Activated CD8-positive, alpha-beta T cell treated with anti-CD3 and anti-CD28 coated beads for 36 hours (primary cell): ENCODE measurements at regions of chr11 and their contacts with region 1.

Region 1: GRCh38 chr11:65329944-65330403 is 3.7 kb upstream of the DPF2 start:
- DNase-seq: peak; percentile 97
- ATAC-seq: peak; percentile 24
- H3K4me3 Mint-ChIP-seq: peak overlapping the region; percentile 3
- H3K27ac Mint-ChIP-seq: no peak overlapping the region
- H3K4me1 Mint-ChIP-seq: peaks cover 12% of the 10 kb centered on the region
- H3K27me3 Mint-ChIP-seq: no peaks in the 10 kb centered on the region
- CTCF ChIP-seq: peak; percentile 92

Region 2: GRCh38 chr11:65134386-65135253 is 195.4 kb before region 1 on chr11 and contains the start of gene SYVN1:
- CTCF ChIA-PET with region 1: interaction called, 10 read pairs
- POLR2A ChIA-PET with region 1: interaction called, 3 read pairs
- intact Hi-C with region 1: no loop called
- DNase-seq: peak; percentile 93
- ATAC-seq: peak; percentile 89
- H3K4me3 Mint-ChIP-seq: peak within 1 kb of the TSS; percentile 100
- H3K27ac Mint-ChIP-seq: peak within 1 kb of the TSS; percentile 100
- H3K4me1 Mint-ChIP-seq: peaks cover 33% of the 10 kb centered on the region
- H3K27me3 Mint-ChIP-seq: no peaks in the 10 kb centered on the region
- CTCF ChIP-seq: no peak
- total RNA-seq, gene SYVN1: 20.6 to 26.8 TPM

Region 3: GRCh38 chr11:65204646-65205601 is 125.0 kb before region 1 on chr11:
- CTCF ChIA-PET with region 1: interaction called, 18 read pairs
- POLR2A ChIA-PET with region 1: no interaction called
- intact Hi-C with region 1: no loop called
- DNase-seq: peak; percentile 55
- ATAC-seq: peak; percentile 90
- H3K4me3 Mint-ChIP-seq: no peak overlapping the region
- H3K27ac Mint-ChIP-seq: no peak overlapping the region
- H3K4me1 Mint-ChIP-seq: peaks cover 3% of the 10 kb centered on the region
- H3K27me3 Mint-ChIP-seq: no peaks in the 10 kb centered on the region
- CTCF ChIP-seq: peak; percentile 98

Region 4: DNA sequence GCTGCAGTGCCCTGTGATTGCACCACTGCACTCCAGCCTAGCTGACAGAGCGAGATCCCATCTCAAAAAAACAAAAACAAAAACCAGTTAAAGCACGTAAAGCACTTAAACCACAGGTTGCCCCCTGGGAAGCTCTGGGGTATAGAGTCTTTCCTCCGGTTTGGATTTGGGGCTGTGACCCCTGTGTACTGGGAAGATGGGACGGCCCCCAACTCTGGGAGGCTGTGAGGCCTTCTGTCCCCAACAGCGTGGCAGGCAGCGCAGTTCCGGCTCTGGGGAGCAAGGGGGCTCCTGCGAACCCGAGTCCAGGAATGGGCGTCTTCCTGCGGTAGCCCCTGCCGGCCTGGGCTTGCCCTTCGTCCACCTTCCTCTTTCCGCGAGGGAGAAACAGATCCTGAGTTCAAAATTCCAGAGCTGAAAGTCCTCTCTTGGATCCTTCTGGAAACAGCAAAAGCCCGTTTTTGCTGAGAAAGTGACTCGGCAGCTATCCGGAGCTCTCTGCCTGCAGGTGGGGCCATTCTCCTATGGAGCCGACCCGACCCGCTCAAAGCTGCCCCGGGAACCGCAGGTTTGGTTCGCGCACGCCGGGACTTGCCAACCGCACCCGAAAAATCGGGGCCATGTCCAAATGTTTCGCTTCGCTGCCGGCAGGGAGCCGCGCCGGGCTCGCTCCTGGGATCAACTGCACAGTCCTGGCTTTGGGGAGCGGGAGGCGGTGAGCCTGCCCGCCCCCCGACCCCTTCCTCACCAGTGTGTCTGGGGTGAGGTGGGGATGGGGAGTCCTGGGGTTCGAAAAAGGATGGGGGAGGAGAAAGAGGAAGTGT is 104.5 kb before region 1 on chr11:
- CTCF ChIA-PET with region 1: interaction called, 34 read pairs
- POLR2A ChIA-PET with region 1: interaction called, 4 read pairs
- intact Hi-C with region 1: no loop called
- DNase-seq: peak; percentile 76
- ATAC-seq: peak; percentile 85
- H3K4me3 Mint-ChIP-seq: peak overlapping the region; percentile 72
- H3K27ac Mint-ChIP-seq: no peak overlapping the region
- H3K4me1 Mint-ChIP-seq: peaks cover 7% of the 10 kb centered on the region
- H3K27me3 Mint-ChIP-seq: peaks cover 19% of the 10 kb centered on the region
- CTCF ChIP-seq: peak; percentile 58

Region 5: GRCh38 chr11:65261591-65262380 is 68.2 kb before region 1 on chr11 and contains the start of gene POLA2:
- CTCF ChIA-PET with region 1: interaction called, 19 read pairs
- POLR2A ChIA-PET with region 1: interaction called, 17 read pairs
- intact Hi-C with region 1: no loop called
- DNase-seq: peak; percentile 95
- ATAC-seq: peak; percentile 86
- H3K4me3 Mint-ChIP-seq: peak within 1 kb of the TSS; percentile 91
- H3K27ac Mint-ChIP-seq: peak within 1 kb of the TSS; percentile 95
- H3K4me1 Mint-ChIP-seq: peaks cover 35% of the 10 kb centered on the region
- H3K27me3 Mint-ChIP-seq: no peaks in the 10 kb centered on the region
- CTCF ChIP-seq: no peak
- total RNA-seq, gene POLA2: 55.2 to 63.8 TPM

Region 6: GRCh38 chr11:65298655-65299179 is 31.3 kb before region 1 on chr11:
- CTCF ChIA-PET with region 1: interaction called, 13 read pairs
- POLR2A ChIA-PET with region 1: interaction called, 3 read pairs
- intact Hi-C with region 1: no loop called
- DNase-seq: no peak
- ATAC-seq: no peak
- H3K4me3 Mint-ChIP-seq: no peak overlapping the region
- H3K27ac Mint-ChIP-seq: no peak overlapping the region
- H3K4me1 Mint-ChIP-seq: no peaks in the 10 kb centered on the region
- H3K27me3 Mint-ChIP-seq: no peaks in the 10 kb centered on the region
- CTCF ChIP-seq: no peak

Region 7: GRCh38 chr11:65354265-65355012 is 24.5 kb after region 1 on chr11 and contains the start of gene TIGD3:
- CTCF ChIA-PET with region 1: interaction called, 22 read pairs
- POLR2A ChIA-PET with region 1: interaction called, 4 read pairs
- intact Hi-C with region 1: no loop called
- DNase-seq: peak; percentile 99
- ATAC-seq: peak; percentile 99
- H3K4me3 Mint-ChIP-seq: peak within 1 kb of the TSS; percentile 82
- H3K27ac Mint-ChIP-seq: peak within 1 kb of the TSS; percentile 63
- H3K4me1 Mint-ChIP-seq: peaks cover 13% of the 10 kb centered on the region
- H3K27me3 Mint-ChIP-seq: no peaks in the 10 kb centered on the region
- CTCF ChIP-seq: no peak
- total RNA-seq, gene TIGD3: 0.65 to 1.4 TPM

Region 8: GRCh38 chr11:65366340-65366773 is 36.4 kb after region 1 on chr11:
- CTCF ChIA-PET with region 1: no interaction called
- POLR2A ChIA-PET with region 1: no interaction called
- intact Hi-C with region 1: no loop called
- DNase-seq: peak; percentile 38
- ATAC-seq: peak; percentile 94
- H3K4me3 Mint-ChIP-seq: no peak overlapping the region
- H3K27ac Mint-ChIP-seq: no peak overlapping the region
- H3K4me1 Mint-ChIP-seq: peaks cover 3% of the 10 kb centered on the region
- H3K27me3 Mint-ChIP-seq: no peaks in the 10 kb centered on the region
- CTCF ChIP-seq: peak; percentile 92

Region 9: GRCh38 chr11:65394125-65394536 is 64.2 kb after region 1 on chr11:
- CTCF ChIA-PET with region 1: no interaction called
- POLR2A ChIA-PET with region 1: no interaction called
- intact Hi-C with region 1: no loop called
- DNase-seq: no peak
- ATAC-seq: no peak
- H3K4me3 Mint-ChIP-seq: no peak overlapping the region
- H3K27ac Mint-ChIP-seq: no peak overlapping the region
- H3K4me1 Mint-ChIP-seq: peaks cover 23% of the 10 kb centered on the region
- H3K27me3 Mint-ChIP-seq: no peaks in the 10 kb centered on the region
- CTCF ChIP-seq: no peak